ENCODE measurements at regions of chr9 and their contacts with region 1.

Region 1: DNA sequence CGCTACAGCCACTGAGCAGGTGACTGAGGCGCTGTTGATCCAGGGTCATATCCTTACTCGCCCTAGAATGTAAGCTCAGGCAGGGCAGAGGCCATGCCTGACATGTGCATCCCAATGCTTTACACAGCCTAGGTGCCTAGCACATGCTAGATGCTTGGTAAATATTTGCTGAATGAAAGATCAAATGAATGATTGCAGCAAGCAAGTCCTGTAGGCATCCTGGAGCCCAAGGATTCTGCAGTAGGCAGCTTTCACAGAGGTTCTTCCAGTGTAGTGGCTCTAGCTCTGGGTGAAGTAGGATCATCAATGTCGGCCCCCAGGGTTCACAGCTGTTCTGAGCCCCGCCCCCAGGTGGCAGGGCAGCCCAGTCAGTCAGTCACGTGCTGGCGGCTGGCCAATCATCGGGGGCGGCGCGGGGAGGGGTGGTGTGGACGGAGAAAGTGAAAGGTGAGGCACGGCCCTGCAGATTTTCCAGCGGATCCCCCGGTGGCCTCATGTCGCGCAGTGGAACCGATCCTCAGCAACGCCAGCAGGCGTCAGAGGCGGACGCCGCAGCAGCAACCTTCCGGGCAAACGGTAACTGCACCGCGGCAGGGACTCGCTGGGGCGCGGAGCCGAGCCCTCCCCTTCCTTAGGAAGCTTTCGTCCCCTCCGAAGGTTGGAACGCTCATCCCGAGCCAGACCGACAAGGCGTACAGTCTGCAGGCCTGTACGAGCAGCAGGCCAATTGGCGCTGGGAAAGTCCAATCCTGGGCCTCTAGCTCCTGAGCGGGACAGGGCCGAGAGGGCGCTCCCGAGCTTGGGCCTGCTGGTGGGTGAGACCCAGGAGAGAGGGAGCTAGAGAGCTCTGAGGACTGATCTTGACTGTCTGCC is at the start of gene GALT:
- DNase-seq: peak; percentile 91 to 95 (median 95)
- H3K4me3 ChIP-seq: peak within 1 kb of the TSS; percentile 69 to 90 (median 82)
- H3K27ac ChIP-seq: peak within 1 kb of the TSS; percentile 46 to 78
- H3K4me1 ChIP-seq: peaks cover 9 to 21% (median 19%) of the 10 kb centered on the region in 4 experiments
- H3K27me3 ChIP-seq: no peaks in the 10 kb centered on the region

Region 2: DNA sequence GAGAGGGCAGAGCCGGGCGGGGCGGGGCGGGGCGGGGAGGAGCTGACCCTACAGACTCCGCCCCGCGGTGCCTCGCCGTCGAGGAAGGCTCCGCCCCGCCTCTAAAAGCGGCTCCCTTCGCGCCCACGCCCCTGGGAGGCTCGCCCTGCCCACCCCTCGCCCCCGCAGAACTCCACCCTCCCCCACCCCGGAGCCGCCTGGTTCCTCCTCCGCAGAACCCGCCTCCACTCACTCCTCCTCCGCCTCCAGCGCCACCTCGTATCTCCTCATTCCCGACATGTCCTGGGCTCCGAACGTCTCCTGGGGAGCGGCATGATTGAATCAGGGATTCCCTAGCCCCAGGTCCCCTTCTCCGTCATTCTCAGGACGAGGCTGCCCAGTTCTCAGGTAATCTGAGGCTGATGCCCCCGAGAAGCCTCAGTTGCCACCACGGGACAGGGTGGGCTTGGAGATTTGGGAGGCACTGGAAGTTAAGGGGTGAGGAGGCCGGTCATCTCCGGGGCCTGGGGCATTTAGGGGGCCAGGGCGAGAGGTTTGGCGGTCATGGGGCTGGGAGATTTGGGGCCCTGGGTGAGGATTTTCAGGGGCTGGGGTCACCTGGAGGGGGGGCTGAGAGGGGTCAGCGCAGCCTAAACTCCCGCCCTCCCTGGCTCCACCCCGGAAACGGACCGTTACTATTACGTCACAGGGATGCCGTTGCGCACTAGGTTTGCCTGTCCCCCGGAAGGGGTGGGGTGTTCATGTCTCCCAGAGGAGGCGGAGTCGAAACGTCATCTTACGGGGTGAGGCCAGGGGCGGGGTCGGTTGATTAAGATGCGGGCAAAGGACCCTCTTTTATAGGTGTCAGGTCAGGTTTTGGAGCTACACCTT is 19.2 kb after region 1 on chr9:
- CTCF ChIA-PET with region 1: interaction called, 96 read pairs
- POLR2A ChIA-PET with region 1: interaction called, 5 read pairs
- DNase-seq: peak; percentile 90 to 94 (median 93)
- H3K4me3 ChIP-seq: peak overlapping the region; percentile 52 to 90 (median 73)
- H3K27ac ChIP-seq: peak overlapping the region; percentile 74 to 89
- H3K4me1 ChIP-seq: peaks cover 0 to 18% (median 15%) of the 10 kb centered on the region in 4 experiments
- H3K27me3 ChIP-seq: peaks cover 0 to 2% (median 0%) of the 10 kb centered on the region in 5 experiments

Region 3: GRCh38 chr9:34686231-34686630 is 39.8 kb after region 1 on chr9:
- CTCF ChIA-PET with region 1: no interaction called
- POLR2A ChIA-PET with region 1: no interaction called
- DNase-seq: no peak
- H3K4me3 ChIP-seq: no peak overlapping the region
- H3K27ac ChIP-seq: no peak overlapping the region
- H3K4me1 ChIP-seq: peaks cover under 1 to 20% (median 10%) of the 10 kb centered on the region in 4 experiments
- H3K27me3 ChIP-seq: peaks cover 0 to 2% (median 0%) of the 10 kb centered on the region in 5 experiments

Region 4: DNA sequence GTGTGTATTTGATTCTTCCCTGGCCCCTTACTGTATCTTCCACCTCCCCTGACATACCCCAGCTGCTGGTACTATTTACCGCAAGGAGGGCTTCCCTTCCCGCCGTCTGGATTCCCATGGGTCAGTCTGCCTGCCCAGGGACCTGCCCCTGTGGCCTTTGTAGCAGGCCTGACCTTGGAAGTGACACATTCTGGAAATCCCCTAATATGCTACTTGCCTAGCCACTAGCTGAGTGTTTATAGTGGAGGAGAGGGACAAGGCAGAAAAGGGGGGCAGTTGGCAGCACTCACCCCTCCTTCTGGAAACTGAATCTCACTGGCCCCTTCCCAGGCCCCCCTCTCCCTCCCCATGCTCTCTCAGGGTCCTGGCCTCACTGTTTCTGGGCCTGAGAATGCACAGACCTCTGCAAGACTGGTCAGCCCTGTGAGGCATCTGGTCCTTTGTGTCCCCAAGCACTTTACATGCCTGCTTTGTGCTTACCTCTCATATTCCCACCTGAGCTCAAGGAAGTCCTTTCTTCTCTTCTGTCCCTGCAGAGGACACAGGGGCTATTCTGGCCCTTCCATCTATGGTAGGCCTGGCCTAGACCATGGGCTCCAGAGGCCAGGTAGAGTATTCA is 71.7 kb after region 1 on chr9:
- CTCF ChIA-PET with region 1: no interaction called
- POLR2A ChIA-PET with region 1: no interaction called
- DNase-seq: no peak
- H3K4me3 ChIP-seq: no peak overlapping the region
- H3K27ac ChIP-seq: no peak overlapping the region
- H3K4me1 ChIP-seq: no peaks in the 10 kb centered on the region
- H3K27me3 ChIP-seq: peaks cover 0 to 9% (median 5%) of the 10 kb centered on the region in 5 experiments